ENCODE measurements at regions of chr21 and their contacts with region 1.

Region 1: DNA sequence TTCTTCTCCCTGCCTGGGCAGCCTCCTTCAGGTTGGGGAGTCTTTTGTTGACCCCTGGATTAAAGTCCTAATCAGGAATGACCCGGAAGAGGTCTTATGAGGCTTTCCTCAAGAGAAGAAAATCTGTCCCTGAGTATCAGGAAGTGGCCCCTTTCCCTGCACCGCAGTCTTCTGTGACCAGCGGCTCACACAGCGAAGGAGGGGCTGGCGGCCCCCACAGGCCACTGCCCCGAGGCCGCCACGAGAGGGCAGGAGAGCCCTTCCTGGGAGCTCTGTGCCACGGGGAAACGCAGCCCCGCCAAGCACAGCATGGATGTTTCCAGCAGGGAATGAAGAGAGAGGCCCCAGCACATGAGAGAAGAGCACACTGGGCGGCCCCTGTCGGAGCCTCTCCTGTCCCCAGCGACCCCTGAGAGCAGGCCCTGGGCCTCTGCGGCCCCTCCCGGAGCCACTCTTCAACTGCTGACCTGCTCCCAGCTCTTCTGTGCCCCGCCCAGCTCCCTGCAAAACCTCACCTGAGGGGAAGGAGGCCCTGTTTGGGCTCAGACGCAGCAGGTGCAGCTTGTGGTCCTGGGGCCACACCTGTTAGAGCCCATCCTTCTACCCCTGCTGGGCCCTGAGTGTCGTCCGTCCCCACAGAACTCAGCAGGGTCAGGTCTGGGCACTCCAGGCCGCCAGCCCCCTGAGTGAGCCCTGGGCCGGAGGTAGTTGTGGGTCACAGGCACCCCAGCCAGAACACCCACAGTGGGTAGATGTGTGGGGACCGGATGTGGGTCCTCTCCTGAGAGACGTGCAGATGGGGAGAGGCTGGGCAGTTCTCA is 4.9 kb upstream of the POFUT2 start:
- DNase-seq: peak; percentile 74 to 93 (median 87)
- ATAC-seq: peak; percentile 69 to 88 (median 82)
- H3K4me3 ChIP-seq: peak overlapping the region in 1 of 4 donors; percentile 1
- H3K27ac ChIP-seq: peak overlapping the region; percentile 20 to 50 (median 35)
- H3K4me1 ChIP-seq: peaks cover 4 to 28% (median 6%) of the 10 kb centered on the region in 3 donors
- H3K27me3 ChIP-seq: no peaks in the 10 kb centered on the region
- CTCF ChIP-seq: peak; percentile 95 to 99 (median 96)

Region 2: DNA sequence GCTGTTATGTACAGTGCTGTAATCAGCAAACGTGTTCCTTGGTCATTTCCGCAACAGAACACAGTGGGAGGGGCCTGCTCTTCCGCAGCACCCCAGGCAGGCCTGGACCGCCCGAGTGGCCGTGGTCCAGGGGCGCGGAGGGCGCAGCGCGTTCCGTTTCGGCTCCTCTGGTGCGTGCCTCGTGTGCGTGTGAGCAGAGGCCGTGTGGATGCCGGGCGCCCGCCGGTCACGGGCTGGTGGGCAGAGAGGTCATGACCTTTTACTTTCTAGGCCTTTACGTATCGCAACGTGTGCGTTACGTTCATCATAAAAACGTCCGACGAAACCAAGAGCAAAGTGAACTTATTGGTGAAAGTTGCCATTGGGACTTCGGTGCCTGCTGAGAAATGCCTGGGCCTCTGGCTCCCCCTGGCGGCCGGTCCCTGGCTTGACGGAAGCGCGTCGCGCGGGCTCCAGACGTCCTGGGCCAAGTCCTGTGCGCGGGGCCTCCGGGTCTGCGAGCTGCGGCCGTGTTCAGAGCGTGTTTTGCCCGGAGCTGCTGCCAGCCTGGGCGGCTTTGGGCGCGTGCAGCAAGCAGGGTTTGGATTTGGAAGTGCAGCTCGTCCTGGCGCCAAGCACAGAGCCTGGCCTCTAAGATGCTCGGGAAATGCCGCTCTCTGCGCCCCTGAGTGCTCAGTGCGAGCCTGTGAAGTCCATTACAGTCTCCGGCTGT is 146.7 kb after region 1 on chr21:
- intact Hi-C with region 1: loop called in 2 of 3 experiments (anchors 5 kb)
- DNase-seq: peak; percentile 63 to 95 (median 81)
- ATAC-seq: peak; percentile 82 to 95 (median 92)
- H3K4me3 ChIP-seq: peak overlapping the region in 1 of 4 donors; percentile 31
- H3K27ac ChIP-seq: peak overlapping the region; percentile 27 to 69 (median 44)
- H3K4me1 ChIP-seq: no peaks in the 10 kb centered on the region
- H3K27me3 ChIP-seq: no peaks in the 10 kb centered on the region
- CTCF ChIP-seq: peak; percentile 93 to 98 (median 98)

Measured in pancreas (tissue), 10 donors.